A673 (cell line): ENCODE measurements at regions of chr6 and their contacts with region 1.

Region 1: DNA sequence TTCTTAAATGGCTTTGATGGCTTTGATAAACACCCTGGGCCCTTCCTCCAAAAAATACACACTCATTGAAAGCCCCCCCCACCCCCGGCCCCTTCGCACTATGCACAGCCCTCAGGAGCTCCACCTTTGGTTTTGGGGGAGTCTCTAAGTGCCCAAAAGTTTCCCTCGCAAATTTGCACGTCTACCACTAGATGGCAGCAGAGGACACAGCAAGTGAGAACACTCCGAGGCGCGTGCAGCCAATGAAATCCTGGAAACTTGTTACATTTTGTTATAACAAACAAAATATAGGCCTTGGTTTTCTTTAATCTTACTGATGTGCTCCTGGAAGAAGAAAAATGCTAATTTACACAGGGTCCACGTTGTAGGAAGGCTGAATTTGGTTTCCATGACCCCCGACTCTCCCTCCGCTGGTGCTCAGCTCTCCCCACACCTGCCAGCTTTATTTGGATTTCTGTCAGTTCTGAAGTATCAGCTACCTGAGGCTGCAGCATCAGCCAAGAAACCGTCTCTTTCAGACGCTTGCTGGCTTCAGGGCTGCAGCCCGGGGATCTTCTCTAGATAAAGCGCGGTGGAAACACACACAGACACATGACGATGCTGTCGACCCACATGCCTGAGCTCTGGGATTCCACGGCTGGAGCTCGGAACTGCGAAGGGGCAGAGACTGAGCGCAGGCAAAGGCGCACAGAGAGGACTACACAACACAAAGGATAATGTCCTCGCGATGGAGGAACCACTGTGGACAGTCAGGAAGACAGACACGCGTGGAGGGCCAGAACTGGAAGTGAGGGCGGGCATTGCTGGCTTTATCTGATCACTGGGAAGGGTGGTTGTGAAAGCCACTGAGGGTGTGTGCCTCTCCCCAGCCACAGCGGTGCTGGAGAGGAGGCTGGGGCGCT is 148.4 kb upstream of the RPS6KA2 start:
- DNase-seq: peak; percentile 86
- H3K4me3 ChIP-seq: no peak overlapping the region
- H3K27ac ChIP-seq: no peak overlapping the region
- H3K4me1 ChIP-seq: no peaks in the 10 kb centered on the region
- H3K27me3 ChIP-seq: peaks cover 10% of the 10 kb centered on the region
- CTCF ChIP-seq: peak; percentile 87

Region 2: GRCh38 chr6:165317723-165318122 is 1457.7 kb before region 1 on chr6:
- CTCF ChIA-PET with region 1: no interaction called
- POLR2A ChIA-PET with region 1: no interaction called
- intact Hi-C with region 1: no loop called
- DNase-seq: no peak
- H3K4me3 ChIP-seq: no peak overlapping the region
- H3K27ac ChIP-seq: no peak overlapping the region
- H3K4me1 ChIP-seq: no peaks in the 10 kb centered on the region
- H3K27me3 ChIP-seq: no peaks in the 10 kb centered on the region
- CTCF ChIP-seq: no peak

Region 3: DNA sequence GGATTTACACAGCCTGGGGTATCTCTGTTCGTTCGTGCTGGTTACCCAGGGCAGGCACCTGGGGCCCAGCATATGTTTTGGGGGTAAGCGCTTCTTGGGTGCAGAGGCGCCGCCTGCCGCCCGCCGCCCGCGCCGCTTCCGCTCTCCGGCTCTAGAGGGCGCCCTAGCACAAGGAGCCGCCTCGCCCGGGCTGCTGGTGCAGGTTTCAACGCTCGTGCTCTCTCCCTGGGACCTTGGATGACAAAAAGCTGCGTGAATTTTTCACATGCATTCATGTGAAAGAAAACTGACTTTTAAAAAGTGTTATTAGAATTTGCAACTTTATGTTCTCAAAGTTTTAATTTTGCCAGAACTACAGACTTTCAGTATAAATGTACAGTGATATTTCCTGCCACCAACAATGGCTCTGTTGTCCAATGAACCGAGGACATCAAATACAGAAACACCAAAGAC is 499.7 kb before region 1 on chr6:
- CTCF ChIA-PET with region 1: no interaction called
- POLR2A ChIA-PET with region 1: no interaction called
- intact Hi-C with region 1: loop called (anchors 10 kb)
- DNase-seq: peak; percentile 68
- H3K4me3 ChIP-seq: no peak overlapping the region
- H3K27ac ChIP-seq: no peak overlapping the region
- H3K4me1 ChIP-seq: no peaks in the 10 kb centered on the region
- H3K27me3 ChIP-seq: no peaks in the 10 kb centered on the region
- CTCF ChIP-seq: peak; percentile 99

Region 4: GRCh38 chr6:166285233-166285632 is 490.2 kb before region 1 on chr6:
- CTCF ChIA-PET with region 1: interaction called, 10 read pairs
- POLR2A ChIA-PET with region 1: no interaction called
- intact Hi-C with region 1: no loop called
- DNase-seq: no peak
- H3K4me3 ChIP-seq: no peak overlapping the region
- H3K27ac ChIP-seq: no peak overlapping the region
- H3K4me1 ChIP-seq: no peaks in the 10 kb centered on the region
- H3K27me3 ChIP-seq: peaks cover 3% of the 10 kb centered on the region
- CTCF ChIP-seq: no peak

Region 5: DNA sequence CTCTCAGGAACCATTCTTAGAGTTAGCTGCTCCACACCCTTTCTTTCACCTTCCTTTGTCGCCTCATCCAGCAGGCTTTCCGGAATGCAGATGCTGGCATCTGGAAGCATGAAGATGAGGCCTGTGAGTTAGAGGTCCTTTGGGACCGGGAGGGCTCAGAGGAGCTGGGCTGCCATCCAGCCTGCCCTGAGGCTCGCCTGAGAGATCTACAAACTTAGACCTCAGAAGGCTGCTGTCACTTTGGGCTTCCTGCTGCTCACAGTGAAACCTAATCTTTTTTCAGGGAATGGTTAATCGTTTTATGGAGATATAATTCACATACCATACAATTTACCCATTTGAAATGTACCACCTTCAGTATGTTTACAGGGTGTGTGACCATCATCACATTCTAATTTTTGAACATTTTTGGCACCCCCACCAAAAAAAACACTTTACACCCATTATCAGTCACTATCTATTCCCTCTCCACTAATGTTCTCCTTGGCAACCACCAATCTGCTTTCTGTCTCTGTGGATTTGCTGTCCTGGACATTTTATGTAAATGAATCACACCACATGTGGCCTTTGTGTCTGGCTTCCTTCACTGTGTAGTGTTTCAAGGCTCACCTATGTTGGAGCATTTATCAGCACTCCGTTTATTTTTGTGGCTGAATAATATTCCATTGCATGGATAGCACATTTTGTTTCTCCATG is 372.7 kb before region 1 on chr6:
- CTCF ChIA-PET with region 1: no interaction called
- POLR2A ChIA-PET with region 1: no interaction called
- intact Hi-C with region 1: no loop called
- DNase-seq: peak; percentile 91
- H3K4me3 ChIP-seq: no peak overlapping the region
- H3K27ac ChIP-seq: no peak overlapping the region
- H3K4me1 ChIP-seq: peaks cover 11% of the 10 kb centered on the region
- H3K27me3 ChIP-seq: no peaks in the 10 kb centered on the region
- CTCF ChIP-seq: no peak

Region 6: DNA sequence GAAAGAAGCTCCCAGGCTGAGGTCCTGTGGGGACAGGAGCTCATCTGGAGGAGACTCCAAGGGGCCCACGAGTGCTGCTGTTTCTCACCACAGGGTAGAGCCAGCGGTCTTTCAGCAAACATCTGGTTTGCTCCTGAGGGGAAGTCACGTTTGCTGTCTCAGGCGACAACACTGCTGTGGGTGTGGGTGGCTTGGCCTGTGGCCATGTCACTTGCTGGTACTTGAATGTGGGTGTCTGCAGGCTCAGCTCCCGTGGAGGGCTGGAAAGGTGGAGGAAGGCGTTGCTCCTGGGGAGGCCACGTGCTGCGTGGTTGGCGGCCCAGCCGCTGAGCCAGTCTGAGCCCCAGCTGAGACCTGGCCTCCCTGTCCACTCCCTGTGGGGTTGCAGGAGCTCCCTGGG is 339.9 kb before region 1 on chr6:
- CTCF ChIA-PET with region 1: no interaction called
- POLR2A ChIA-PET with region 1: no interaction called
- intact Hi-C with region 1: loop called (anchors 5 kb)
- DNase-seq: peak; percentile 54
- H3K4me3 ChIP-seq: no peak overlapping the region
- H3K27ac ChIP-seq: no peak overlapping the region
- H3K4me1 ChIP-seq: peaks cover 4% of the 10 kb centered on the region
- H3K27me3 ChIP-seq: no peaks in the 10 kb centered on the region
- CTCF ChIP-seq: peak; percentile 46; the same call in 1 of the 2 replicates

Region 7: GRCh38 chr6:166950443-166950821 is 175.0 kb after region 1 on chr6:
- CTCF ChIA-PET with region 1: interaction called, 22 read pairs
- POLR2A ChIA-PET with region 1: no interaction called
- intact Hi-C with region 1: no loop called
- DNase-seq: no peak
- H3K4me3 ChIP-seq: no peak overlapping the region
- H3K27ac ChIP-seq: no peak overlapping the region
- H3K4me1 ChIP-seq: no peaks in the 10 kb centered on the region
- H3K27me3 ChIP-seq: no peaks in the 10 kb centered on the region
- CTCF ChIP-seq: no peak

Region 8: GRCh38 chr6:167200806-167201205 is 425.4 kb after region 1 on chr6:
- CTCF ChIA-PET with region 1: no interaction called
- POLR2A ChIA-PET with region 1: no interaction called
- intact Hi-C with region 1: loop called (anchors 5 kb)
- DNase-seq: no peak
- H3K4me3 ChIP-seq: no peak overlapping the region
- H3K27ac ChIP-seq: no peak overlapping the region
- H3K4me1 ChIP-seq: no peaks in the 10 kb centered on the region
- H3K27me3 ChIP-seq: no peaks in the 10 kb centered on the region
- CTCF ChIP-seq: no peak

Region 9: DNA sequence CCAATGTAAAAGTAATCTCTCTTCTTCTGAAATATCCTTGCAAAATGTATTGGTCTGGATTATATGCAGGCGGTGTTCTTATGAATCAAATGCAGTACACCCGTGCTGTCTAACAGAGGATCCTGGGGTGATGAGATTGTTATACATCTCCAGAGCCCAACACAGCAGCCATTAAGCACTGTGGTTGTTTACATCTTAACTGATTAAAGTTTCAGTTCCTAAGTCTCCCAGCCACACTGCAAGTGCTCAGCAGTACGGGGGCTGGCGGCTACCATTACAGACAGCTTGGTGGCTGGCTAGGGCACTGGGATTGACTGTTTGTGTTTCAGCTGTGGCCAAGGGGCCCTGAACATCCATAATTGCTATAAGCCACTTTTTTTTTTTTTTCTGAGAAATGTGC is 522.7 kb after region 1 on chr6:
- CTCF ChIA-PET with region 1: no interaction called
- POLR2A ChIA-PET with region 1: no interaction called
- intact Hi-C with region 1: loop called (anchors 10 kb)
- DNase-seq: no peak
- H3K4me3 ChIP-seq: no peak overlapping the region
- H3K27ac ChIP-seq: no peak overlapping the region
- H3K4me1 ChIP-seq: no peaks in the 10 kb centered on the region
- H3K27me3 ChIP-seq: peaks cover 3% of the 10 kb centered on the region
- CTCF ChIP-seq: no peak